Heart left ventricle (tissue), 16 donors: ENCODE measurements at regions of chr1 and their contacts with region 1.

Region 1: GRCh38 chr1:18618546-18619466 is 11.8 kb upstream of the PAX7 start:
- DNase-seq: no peak
- ATAC-seq: no peak
- H3K4me3 ChIP-seq: no peak overlapping the region
- H3K27ac ChIP-seq: no peak overlapping the region
- H3K4me1 ChIP-seq: no peaks in the 10 kb centered on the region
- H3K27me3 ChIP-seq: peaks cover 0 to 86% (median 37%) of the 10 kb centered on the region in 9 donors
- CTCF ChIP-seq: no peak
- POLR2A ChIP-seq: no peak

Region 2: DNA sequence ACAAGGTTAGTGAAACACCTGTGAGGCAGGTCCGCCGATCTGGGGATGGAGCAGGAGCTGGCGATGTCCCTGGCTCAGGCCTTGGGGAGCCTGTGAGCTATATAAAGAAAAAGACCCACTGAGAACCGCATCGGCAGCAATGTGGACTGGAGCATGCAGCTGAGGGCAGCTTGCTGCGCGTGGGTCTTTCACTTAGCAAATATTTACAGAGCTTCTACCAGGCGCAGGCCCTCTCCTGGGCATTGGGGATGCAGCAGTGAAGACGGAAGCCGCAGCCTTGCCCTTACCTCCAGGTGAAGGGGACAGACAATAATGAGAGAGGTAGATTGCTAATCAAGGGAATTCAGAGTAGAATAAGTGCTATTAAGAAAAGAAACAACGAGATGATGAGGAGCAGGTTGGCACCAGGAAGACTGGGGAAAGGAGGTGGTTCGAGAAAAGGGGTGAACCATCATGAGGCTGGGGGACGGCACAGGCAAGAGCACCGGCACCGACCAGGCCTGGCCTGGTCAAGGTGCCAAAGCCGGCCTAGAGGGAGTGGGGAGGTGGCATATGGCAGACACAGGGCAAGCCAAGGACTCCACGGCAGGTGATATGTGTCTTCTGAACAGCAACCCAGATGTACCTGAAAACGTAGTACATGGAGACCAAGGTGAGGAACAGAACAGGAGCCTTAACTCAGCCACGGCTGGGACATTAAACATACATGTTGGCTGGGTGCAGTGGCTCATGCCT is 48.8 kb before region 1 on chr1:
- intact Hi-C with region 1: loop called in 1 of 10 experiments (anchors 2 kb)
- DNase-seq: no peak
- ATAC-seq: no peak
- H3K4me3 ChIP-seq: no peak overlapping the region
- H3K27ac ChIP-seq: no peak overlapping the region
- H3K4me1 ChIP-seq: no peaks in the 10 kb centered on the region
- H3K27me3 ChIP-seq: peaks cover 0 to 45% (median 3%) of the 10 kb centered on the region in 9 donors
- CTCF ChIP-seq: no peak
- POLR2A ChIP-seq: no peak

Region 3: DNA sequence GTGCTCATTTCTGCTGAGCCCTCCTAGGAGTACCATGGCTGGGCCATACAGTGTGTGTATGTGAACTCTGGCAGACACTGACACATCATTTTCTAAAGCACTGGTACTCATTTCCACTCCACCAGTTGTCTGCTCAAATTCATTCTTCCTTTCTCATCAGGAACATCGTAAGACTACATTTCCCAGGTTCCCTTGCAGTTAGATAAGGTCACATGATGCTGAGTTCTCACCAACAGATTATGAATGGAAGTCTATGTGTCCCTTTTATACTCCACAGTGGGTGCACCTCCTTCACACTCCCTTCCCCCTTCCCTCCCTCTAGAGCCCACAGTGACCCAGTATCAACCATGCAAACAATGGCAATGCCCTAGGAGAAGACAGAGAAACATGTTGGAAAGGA is 26.4 kb before region 1 on chr1:
- intact Hi-C with region 1: no loop called
- DNase-seq: no peak
- ATAC-seq: no peak
- H3K4me3 ChIP-seq: no peak overlapping the region
- H3K27ac ChIP-seq: no peak overlapping the region
- H3K4me1 ChIP-seq: peaks cover 0 to under 1% (median 0%) of the 10 kb centered on the region in 12 donors
- H3K27me3 ChIP-seq: peaks cover 0 to 66% (median 12%) of the 10 kb centered on the region in 9 donors
- CTCF ChIP-seq: no peak
- POLR2A ChIP-seq: no peak